ENCODE measurements at regions of chr4 and their contacts with region 1.

Region 1: GRCh38 chr4:156771171-156771837 is 200.3 kb downstream of the PDGFC start:
- DNase-seq: peak; percentile 99
- H3K4me3 ChIP-seq: peak overlapping the region; percentile 13 to 36 (median 18)
- H3K27ac ChIP-seq: peak overlapping the region; percentile 93
- H3K4me1 ChIP-seq: peaks cover 45% of the 10 kb centered on the region
- H3K27me3 ChIP-seq: no peaks in the 10 kb centered on the region
- CTCF ChIP-seq: no peak

Region 2: GRCh38 chr4:156594624-156595023 is 176.7 kb before region 1 on chr4:
- CTCF ChIA-PET with region 1: no interaction called
- dilution Hi-C with region 1: no loop called
- in situ Hi-C with region 1: no loop called
- intact Hi-C with region 1: loop called (anchors 10 kb)
- DNase-seq: peak; percentile 24
- H3K4me3 ChIP-seq: no peak overlapping the region
- H3K27ac ChIP-seq: no peak overlapping the region
- H3K4me1 ChIP-seq: peaks cover 6% of the 10 kb centered on the region
- H3K27me3 ChIP-seq: no peaks in the 10 kb centered on the region
- CTCF ChIP-seq: no peak

Region 3: DNA sequence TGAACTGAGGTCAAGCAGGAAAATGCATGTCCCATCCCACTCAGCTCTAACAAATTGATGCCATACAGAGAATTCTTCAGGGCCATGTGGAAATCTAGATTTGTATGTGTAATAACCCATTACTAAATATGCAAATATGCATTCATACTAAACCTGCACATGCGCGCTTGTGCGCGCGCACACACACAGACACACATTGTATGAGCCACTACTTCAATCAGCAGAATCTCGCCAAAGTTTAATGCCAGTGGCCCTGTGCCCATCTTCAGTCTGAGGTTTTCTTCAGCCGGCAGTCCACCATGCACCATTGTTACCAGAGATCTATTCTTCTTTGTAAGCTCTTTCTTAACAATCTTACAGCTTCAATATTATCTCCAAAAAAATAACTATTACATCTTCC is 76.1 kb before region 1 on chr4:
- CTCF ChIA-PET with region 1: no interaction called
- dilution Hi-C with region 1: no loop called
- in situ Hi-C with region 1: no loop called
- intact Hi-C with region 1: no loop called
- DNase-seq: no peak
- H3K4me3 ChIP-seq: no peak overlapping the region
- H3K27ac ChIP-seq: no peak overlapping the region
- H3K4me1 ChIP-seq: no peaks in the 10 kb centered on the region
- H3K27me3 ChIP-seq: no peaks in the 10 kb centered on the region
- CTCF ChIP-seq: no peak

Region 4: GRCh38 chr4:156799121-156799589 is 27.9 kb after region 1 on chr4:
- CTCF ChIA-PET with region 1: no interaction called
- dilution Hi-C with region 1: no loop called
- in situ Hi-C with region 1: no loop called
- intact Hi-C with region 1: loop called (anchors 1 kb)
- DNase-seq: peak; percentile 60
- H3K4me3 ChIP-seq: peak overlapping the region in 1 of 3 experiments; percentile 2
- H3K27ac ChIP-seq: peak overlapping the region; percentile 88
- H3K4me1 ChIP-seq: peaks cover 38% of the 10 kb centered on the region
- H3K27me3 ChIP-seq: no peaks in the 10 kb centered on the region
- CTCF ChIP-seq: no peak

Region 5: DNA sequence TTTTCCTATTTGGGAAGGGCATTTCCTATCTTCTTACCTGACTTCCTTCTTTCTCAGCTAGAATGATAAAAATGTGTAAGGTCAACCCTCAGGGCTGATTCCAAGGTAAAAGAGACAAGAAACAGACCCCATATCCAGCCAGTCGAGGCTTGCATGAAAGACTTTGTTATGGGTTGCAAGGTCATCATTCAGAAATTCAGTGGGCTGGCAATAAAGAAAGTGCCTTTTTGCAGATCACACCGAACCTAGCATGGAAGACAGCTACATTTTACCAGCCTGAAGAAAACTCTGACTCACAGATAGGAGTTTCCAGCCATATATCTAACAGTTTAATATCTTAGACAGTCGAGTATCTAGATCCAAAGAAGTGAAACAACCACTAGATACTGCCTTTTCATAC is 112.9 kb after region 1 on chr4:
- CTCF ChIA-PET with region 1: interaction called, 14 read pairs
- dilution Hi-C with region 1: no loop called
- in situ Hi-C with region 1: no loop called
- intact Hi-C with region 1: loop called (anchors 5 kb)
- DNase-seq: peak; percentile 79
- H3K4me3 ChIP-seq: peak overlapping the region in 2 of 3 experiments; percentile 17 to 29
- H3K27ac ChIP-seq: peak overlapping the region; percentile 49
- H3K4me1 ChIP-seq: peaks cover 15% of the 10 kb centered on the region
- H3K27me3 ChIP-seq: no peaks in the 10 kb centered on the region
- CTCF ChIP-seq: no peak

Region 6: GRCh38 chr4:156946516-156947424 is 175.5 kb after region 1 on chr4:
- CTCF ChIA-PET with region 1: no interaction called
- dilution Hi-C with region 1: loop called (anchors 25 kb)
- in situ Hi-C with region 1: no loop called
- intact Hi-C with region 1: loop called (anchors 5 kb)
- DNase-seq: peak; percentile 98
- H3K4me3 ChIP-seq: peak overlapping the region in 1 of 3 experiments; percentile 19
- H3K27ac ChIP-seq: peak overlapping the region; percentile 98
- H3K4me1 ChIP-seq: peaks cover 49% of the 10 kb centered on the region
- H3K27me3 ChIP-seq: no peaks in the 10 kb centered on the region
- CTCF ChIP-seq: no peak

Region 7: DNA sequence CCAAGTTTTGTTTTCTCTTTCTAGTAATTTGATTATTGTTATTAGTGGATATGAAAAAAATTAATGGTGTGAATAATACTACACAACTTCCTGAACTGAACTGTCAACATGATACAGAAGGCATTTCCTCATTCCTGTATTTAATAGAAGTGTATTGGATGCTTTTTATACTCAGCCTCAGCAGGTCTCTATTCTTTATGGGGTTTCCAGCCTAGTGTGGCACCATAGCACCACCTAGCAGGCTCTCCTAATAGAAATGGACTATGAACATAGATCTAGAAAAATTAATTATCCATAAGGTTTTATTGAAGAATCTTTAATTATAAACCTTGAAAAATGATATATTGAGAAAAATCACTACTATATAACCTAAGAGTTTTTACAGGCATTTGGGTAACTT is 357.1 kb after region 1 on chr4:
- CTCF ChIA-PET with region 1: interaction called, 3 read pairs
- dilution Hi-C with region 1: no loop called
- in situ Hi-C with region 1: no loop called
- intact Hi-C with region 1: loop called (anchors 5 kb)
- DNase-seq: peak; percentile 36
- H3K4me3 ChIP-seq: no peak overlapping the region
- H3K27ac ChIP-seq: no peak overlapping the region
- H3K4me1 ChIP-seq: no peaks in the 10 kb centered on the region
- H3K27me3 ChIP-seq: no peaks in the 10 kb centered on the region
- CTCF ChIP-seq: peak; percentile 39 to 68

Measured in mammary epithelial cell (primary cell).